Psoas muscle (tissue), 8 donors: ENCODE measurements at regions of chr1 and their contacts with region 1.

Region 1: GRCh38 chr1:168439456-168440375 is 104.1 kb downstream of the XCL2 start:
- DNase-seq: peak; percentile 53 to 55
- ATAC-seq: peak; percentile 82 to 88 (median 86)
- H3K4me3 ChIP-seq: peak overlapping the region; percentile 44
- H3K27ac ChIP-seq: no peak overlapping the region
- H3K4me1 ChIP-seq: no peaks in the 10 kb centered on the region
- H3K27me3 ChIP-seq: no peaks in the 10 kb centered on the region
- CTCF ChIP-seq: peak; percentile 67

Region 2: DNA sequence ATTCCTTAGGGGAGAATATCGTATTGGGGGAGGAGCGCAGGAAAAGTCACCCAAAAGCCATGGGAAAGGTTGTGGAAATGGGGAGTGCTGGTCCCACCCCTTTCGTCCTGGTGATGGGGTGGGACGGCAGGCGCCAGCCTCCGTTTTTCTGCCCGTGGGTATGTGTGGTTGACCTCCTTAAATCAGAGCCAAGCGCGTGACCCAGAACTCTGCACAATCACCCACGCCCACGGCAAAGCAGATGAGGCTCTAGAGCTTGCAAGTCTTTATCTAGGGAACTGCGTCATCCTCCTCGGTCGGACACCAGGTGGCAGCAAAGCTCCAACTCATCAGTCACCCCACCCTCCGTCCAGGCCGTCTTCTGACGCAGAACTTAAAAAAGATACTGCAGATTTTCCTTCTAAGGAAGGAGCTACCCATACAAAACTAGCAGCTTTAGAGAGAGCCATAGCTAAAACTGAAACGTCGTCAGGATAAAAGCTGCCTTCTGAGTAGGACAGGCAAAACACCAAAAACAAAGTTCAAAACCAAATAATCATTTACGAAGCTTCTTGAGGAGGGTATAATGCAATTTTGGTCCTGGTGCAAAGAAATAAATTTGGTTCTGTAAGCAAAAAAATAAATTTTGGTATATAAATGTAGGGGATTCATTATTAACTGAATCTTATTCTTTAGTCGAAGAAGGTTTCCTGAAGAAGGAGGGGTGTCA is 97.0 kb before region 1 on chr1:
- intact Hi-C with region 1: loop called in 1 of 2 experiments (anchors 5 kb)
- DNase-seq: peak; percentile 87 to 90
- ATAC-seq: peak; percentile 96 to 100 (median 98)
- H3K4me3 ChIP-seq: peak overlapping the region; percentile 41
- H3K27ac ChIP-seq: no peak overlapping the region
- H3K4me1 ChIP-seq: peaks cover 5% of the 10 kb centered on the region
- H3K27me3 ChIP-seq: no peaks in the 10 kb centered on the region
- CTCF ChIP-seq: peak; percentile 85

Region 3: GRCh38 chr1:168567007-168567406 is 127.3 kb after region 1 on chr1:
- intact Hi-C with region 1: loop called (anchors 2 to 10 kb)
- DNase-seq: no peak
- ATAC-seq: no peak
- H3K4me3 ChIP-seq: no peak overlapping the region
- H3K27ac ChIP-seq: no peak overlapping the region
- H3K4me1 ChIP-seq: no peaks in the 10 kb centered on the region
- H3K27me3 ChIP-seq: no peaks in the 10 kb centered on the region
- CTCF ChIP-seq: no peak

Region 4: GRCh38 chr1:168572633-168573032 is 132.9 kb after region 1 on chr1:
- intact Hi-C with region 1: loop called (anchors 2 to 10 kb)
- DNase-seq: no peak
- ATAC-seq: no peak
- H3K4me3 ChIP-seq: no peak overlapping the region
- H3K27ac ChIP-seq: no peak overlapping the region
- H3K4me1 ChIP-seq: no peaks in the 10 kb centered on the region
- H3K27me3 ChIP-seq: no peaks in the 10 kb centered on the region
- CTCF ChIP-seq: no peak